HEK293 (cell line): ENCODE measurements at regions of chr17 and their contacts with region 1.

Region 1: DNA sequence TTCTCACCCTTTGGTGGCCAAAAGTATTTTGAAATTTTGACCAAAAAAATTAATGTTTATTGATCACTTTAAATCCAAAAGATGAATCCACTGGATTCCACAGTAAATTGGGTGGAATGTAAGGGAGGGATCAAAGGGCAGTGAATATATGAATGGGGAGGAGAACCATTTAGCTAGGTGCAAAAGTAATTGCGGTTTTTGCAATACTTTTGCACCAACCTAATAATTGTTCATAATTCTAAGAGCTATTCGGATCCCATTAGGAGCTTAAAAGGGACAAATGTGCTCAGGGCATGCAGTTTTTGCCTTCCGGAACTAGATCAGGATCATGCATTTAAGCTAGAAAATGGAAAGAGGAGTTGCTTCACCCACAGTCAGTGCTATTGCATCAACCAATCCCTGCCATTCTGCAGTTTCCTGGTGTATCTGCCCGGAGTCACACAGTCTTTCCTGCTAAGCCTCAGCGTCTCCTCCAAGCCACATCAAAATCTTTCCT is at the start of gene LPO:
- H3K4me3 ChIP-seq: no peak within 1 kb of the TSS
- H3K27ac ChIP-seq: no peak within 1 kb of the TSS
- H3K4me1 ChIP-seq: no peaks in the 10 kb centered on the region; the same call in 1 of the 2 replicates
- CTCF ChIP-seq: no peak

Region 2: GRCh38 chr17:58066401-58066800 is 171.8 kb before region 1 on chr17:
- CTCF ChIA-PET with region 1: no interaction called
- POLR2A ChIA-PET with region 1: no interaction called
- H3K4me3 ChIP-seq: no peak overlapping the region
- H3K27ac ChIP-seq: no peak overlapping the region
- H3K4me1 ChIP-seq: no peaks in the 10 kb centered on the region
- CTCF ChIP-seq: no peak

Region 3: DNA sequence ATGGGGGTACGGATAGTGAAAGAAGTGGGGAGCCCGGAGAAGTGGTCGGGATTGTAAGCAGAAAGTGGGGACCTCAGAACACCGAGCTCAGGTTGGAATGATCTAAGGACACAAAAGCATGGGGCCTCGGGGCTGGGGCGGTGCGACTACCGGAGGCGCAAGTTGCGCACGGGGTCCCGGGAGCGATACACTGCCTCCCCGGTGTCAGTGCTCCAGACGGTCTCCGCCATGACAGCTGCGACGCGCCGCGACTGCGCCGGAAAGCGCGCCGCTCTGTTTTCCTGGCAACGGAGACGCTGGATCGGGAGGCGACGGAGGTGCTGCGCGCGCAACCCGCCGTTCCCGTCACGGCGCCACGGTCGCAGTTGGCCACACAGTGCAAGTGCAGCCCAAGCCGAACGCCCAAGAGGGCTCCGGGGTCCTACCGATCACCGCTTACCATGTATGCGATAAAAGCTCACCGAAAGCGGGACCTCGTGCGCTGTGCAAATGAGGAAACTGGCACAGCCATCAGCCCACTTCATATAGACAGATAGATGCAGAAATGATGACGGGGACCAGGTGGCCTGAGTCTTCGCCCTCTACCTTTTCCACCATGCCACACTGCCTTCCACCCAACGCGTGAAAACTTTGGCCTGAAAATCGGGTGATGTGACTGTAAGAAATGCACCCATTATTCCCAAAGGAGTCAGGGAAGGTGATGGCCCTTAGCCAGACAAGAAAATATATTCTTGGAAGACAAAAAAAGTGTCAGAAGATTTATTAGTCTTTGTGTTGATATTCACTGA is 19.0 kb before region 1 on chr17 and contains the start of gene MKS1:
- CTCF ChIA-PET with region 1: interaction called, 11 read pairs
- POLR2A ChIA-PET with region 1: interaction called, 4 read pairs
- H3K4me3 ChIP-seq: peak within 1 kb of the TSS; percentile 79
- H3K27ac ChIP-seq: peak within 1 kb of the TSS; percentile 14; the same call in 1 of the 2 replicates
- H3K4me1 ChIP-seq: no peaks in the 10 kb centered on the region
- CTCF ChIP-seq: peak; percentile 94

Region 4: DNA sequence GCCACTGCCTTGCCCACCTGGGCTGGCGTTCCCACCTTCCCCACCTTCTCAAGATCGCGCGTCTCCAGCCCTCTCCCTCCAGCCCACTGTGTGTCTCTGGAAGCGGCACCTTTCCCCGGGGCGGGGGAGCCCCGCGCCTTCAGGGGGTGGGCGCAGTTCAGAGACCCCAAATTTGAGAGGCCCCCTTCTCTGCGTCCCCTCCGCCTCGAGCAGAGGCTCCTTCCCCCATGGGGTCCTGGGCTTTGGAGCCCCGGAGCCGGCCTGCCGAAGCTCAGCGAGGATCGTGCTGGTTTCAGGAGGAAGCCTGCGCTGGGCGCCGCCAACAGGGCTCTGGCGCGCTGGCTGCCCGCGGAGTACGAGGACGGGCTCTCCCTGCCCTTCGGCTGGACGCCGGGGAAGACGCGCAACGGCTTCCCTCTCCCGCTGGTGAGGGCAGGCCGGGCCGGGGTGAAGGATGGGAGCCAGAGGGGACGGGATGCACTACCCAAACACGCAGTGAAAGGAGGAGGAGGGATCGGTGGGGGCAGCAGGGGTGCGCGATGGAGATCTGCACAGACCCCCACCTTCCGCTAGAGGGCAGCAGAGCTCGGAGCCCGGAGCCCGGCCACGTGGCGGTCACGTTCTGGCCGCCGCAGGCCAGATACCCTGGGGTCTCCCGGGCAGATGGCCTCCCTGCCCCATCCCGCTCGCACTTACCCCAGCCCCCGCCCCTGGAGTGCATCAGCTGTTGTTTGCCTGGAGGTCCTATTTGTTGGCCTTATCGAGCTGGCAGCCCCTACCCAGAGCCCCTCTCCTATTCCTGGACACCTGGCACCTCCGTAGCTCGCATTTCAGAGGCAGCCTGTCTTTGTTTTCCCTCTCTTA is 11.3 kb after region 1 on chr17:
- CTCF ChIA-PET with region 1: interaction called, 32 read pairs
- POLR2A ChIA-PET with region 1: no interaction called
- H3K4me3 ChIP-seq: peak overlapping the region; percentile 32
- H3K27ac ChIP-seq: no peak overlapping the region; the same call in 1 of the 2 replicates
- H3K4me1 ChIP-seq: no peaks in the 10 kb centered on the region
- CTCF ChIP-seq: peak; percentile 71

Region 5: DNA sequence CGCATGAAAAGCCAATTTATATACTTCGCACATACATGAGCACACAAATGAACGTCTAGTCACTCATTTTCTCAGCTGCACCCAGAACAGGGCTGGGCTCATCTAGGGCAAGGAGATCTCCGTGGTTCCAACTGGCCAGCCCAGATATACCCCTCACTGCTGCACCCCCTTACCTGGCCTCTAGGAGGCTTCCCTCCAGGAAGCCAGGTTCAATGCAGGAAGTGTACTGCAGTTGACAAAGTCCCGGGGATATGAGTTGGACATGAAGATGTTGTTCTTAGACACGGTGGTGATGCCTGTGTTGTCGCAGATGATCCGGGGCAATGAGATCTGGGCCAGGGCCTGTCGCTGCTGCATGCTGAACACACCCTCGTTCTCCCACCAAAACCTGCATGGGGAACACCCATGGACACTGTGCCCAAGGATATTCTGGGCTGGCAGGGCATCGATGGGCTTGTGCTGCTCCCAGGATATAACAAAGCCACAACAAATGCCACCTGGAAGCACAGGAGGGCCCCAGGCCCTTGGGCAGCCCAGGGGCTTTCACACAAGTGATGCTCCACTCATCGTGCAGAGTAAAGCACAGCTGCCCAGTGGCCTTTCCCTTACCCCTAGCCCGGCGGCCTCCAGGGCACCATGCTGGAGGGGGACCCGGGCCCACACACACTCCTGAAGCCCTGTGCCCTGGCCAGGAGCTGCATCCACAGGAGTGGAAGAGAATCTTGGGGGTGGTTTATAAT is 32.5 kb after region 1 on chr17:
- CTCF ChIA-PET with region 1: no interaction called
- POLR2A ChIA-PET with region 1: no interaction called
- H3K4me3 ChIP-seq: no peak overlapping the region
- H3K27ac ChIP-seq: no peak overlapping the region
- H3K4me1 ChIP-seq: no peaks in the 10 kb centered on the region
- CTCF ChIP-seq: no peak